Esophagus muscularis mucosa (tissue), 4 donors: ENCODE measurements at regions of chr11 and their contacts with region 1.

Region 1: DNA sequence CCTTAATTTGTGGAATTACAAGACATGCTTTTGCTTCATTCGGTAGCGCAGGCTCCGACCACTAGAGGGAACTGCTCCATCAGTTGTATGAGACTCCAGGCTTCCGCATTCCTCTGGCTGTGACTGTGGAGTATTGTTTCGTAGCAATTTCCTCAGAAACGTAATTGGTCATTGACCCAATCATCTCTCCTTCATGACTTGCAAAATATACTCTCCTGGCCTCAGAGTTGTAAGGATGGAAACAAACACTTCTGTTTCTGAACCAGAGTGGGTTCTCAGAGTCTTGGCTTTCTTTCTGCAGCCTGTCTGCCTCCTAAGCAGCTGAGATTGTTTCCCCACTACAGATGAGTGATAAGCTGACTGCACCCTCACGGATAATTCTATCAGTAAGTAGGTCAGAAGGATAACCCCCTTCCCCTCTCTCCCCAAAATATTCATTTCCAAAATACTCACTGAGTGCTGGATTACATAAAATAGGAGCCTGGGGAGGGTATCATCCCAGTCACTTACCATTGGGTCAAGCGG is 146.8 kb upstream of the ZC3H12C start:
- DNase-seq: peak; percentile 97
- H3K4me3 ChIP-seq: peak overlapping the region; percentile 28 to 49 (median 37)
- H3K27ac ChIP-seq: peak overlapping the region; percentile 49 to 72 (median 64)
- H3K4me1 ChIP-seq: peaks cover 4 to 7% (median 5%) of the 10 kb centered on the region in 4 donors
- H3K27me3 ChIP-seq: no peaks in the 10 kb centered on the region
- CTCF ChIP-seq: peak; percentile 89 to 97 (median 92)
- EP300 ChIP-seq: no peak
- POLR2A ChIP-seq: no peak

Region 2: DNA sequence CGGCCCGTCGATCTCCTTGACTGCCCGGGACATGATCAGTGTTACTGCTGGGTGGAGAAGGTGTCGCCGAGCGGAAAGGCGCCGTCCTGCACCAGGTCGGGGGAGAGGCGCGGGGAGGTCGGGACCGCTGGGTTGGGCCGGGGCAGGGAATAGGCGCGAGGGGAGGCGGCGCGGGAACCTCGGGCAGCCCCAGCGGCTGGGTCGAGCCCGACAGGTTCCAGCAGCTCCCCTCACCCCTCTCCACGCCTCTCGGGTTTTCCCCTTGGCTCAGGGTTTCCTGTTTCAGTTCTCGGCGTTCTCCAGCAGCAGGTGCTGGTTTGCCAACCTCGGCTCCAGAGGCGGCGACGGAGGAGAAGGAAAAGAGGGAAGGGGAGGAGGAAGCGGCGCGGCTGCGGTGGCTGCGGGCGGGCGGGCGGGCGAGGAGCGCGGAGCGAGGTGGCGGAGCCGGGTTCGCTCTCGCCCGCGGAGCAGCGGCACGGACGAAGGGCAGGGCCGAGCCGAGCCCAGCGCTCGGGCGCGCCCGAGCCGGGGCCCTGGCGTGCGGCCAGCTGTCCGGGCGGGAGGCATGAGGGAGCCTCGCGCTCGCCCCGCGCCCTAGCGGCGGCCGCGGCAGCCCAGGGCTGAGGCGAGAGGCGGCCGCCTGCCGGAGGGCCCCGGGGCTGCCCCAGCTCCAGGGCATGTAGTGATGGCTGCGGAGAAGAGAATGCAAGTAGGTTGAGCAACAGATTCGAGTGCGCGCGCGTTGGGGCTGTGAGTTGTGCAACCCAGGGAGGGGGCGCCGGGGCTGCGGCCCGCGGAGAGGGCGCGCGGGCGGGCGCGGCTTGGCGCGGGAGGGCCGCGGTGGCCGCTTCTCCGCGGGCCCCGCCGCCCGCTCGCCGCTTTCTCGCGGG is 146.4 kb after region 1 on chr11 and contains the start of gene ZC3H12C:
- intact Hi-C with region 1: loop called (anchors 2 kb)
- DNase-seq: peak; percentile 96
- H3K4me3 ChIP-seq: peak within 1 kb of the TSS; percentile 67 to 89 (median 82)
- H3K27ac ChIP-seq: peak within 1 kb of the TSS; percentile 95 to 98 (median 98)
- H3K4me1 ChIP-seq: peaks cover 19 to 49% (median 39%) of the 10 kb centered on the region in 4 donors
- H3K27me3 ChIP-seq: no peaks in the 10 kb centered on the region
- CTCF ChIP-seq: peak in 2 of 3 experiments; percentile 51 to 64
- EP300 ChIP-seq: no peak
- POLR2A ChIP-seq: peak; percentile 41
- total RNA-seq, gene ZC3H12C: 21.9 to 33.6 (median 24.4) TPM

Region 3: GRCh38 chr11:110173811-110174644 is 227.6 kb after region 1 on chr11:
- intact Hi-C with region 1: loop called (anchors 10 kb)
- DNase-seq: no peak
- H3K4me3 ChIP-seq: peak overlapping the region in 3 of 4 donors; percentile 1 to 34 (median 19)
- H3K27ac ChIP-seq: no peak overlapping the region
- H3K4me1 ChIP-seq: peaks cover 0 to 20% (median 16%) of the 10 kb centered on the region in 4 donors
- H3K27me3 ChIP-seq: no peaks in the 10 kb centered on the region
- CTCF ChIP-seq: peak; percentile 57 to 81 (median 62)
- EP300 ChIP-seq: no peak
- POLR2A ChIP-seq: no peak

Region 4: GRCh38 chr11:110195845-110196754 is 249.7 kb after region 1 on chr11:
- intact Hi-C with region 1: loop called (anchors 5 kb)
- DNase-seq: peak; percentile 50
- H3K4me3 ChIP-seq: no peak overlapping the region
- H3K27ac ChIP-seq: no peak overlapping the region
- H3K4me1 ChIP-seq: no peaks in the 10 kb centered on the region
- H3K27me3 ChIP-seq: no peaks in the 10 kb centered on the region
- CTCF ChIP-seq: no peak
- EP300 ChIP-seq: no peak
- POLR2A ChIP-seq: no peak